PC-3 (cell line): ENCODE measurements at regions of chr1 and their contacts with region 1.

Region 1: DNA sequence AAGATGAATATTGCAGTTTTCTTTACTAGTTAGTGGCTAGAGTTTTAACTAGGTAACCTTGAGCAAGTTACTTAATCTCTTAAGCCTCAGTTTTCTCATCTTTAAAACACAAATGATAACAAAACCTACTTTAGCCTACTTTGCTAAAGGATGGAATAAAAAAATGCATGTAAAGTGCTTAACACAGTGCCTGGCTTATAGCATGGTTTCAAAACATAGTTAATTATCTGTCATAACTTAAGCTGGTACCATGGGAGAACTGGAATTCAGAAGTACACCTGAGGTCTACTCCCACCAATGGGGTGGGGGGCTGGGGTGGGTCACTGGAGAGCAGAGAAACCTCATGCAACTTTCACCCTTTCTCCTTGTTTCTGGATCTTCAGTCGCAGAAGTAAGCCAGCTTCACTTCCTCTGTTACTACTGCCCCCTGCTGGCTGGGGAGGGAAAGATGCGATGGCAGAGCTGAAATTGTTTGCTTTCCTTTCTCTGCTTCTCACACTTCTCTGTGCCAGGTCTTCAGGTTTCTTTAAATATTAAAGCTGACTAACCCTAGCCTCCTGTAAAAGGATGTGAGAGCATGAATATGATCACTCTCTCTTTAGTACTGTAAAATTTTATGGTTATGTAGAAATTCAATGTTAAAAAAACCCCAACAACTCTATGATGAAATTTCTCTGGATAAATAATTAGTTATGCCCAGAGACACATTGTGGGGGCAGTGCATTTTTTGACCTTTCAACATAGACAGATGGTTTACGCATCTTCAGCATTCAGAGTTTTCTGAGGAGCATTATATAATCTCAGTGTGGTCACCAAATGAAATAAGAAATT is 324.2 kb downstream of the HLX start:
- DNase-seq: peak; percentile 94
- ATAC-seq: peak; percentile 95
- H3K4me3 ChIP-seq: no peak overlapping the region
- H3K27ac ChIP-seq: peak overlapping the region; percentile 8; the same call in 1 of the 2 replicates
- H3K4me1 ChIP-seq: peaks cover 17% of the 10 kb centered on the region
- H3K27me3 ChIP-seq: no peaks in the 10 kb centered on the region
- CTCF ChIP-seq: peak; percentile 87

Region 2: DNA sequence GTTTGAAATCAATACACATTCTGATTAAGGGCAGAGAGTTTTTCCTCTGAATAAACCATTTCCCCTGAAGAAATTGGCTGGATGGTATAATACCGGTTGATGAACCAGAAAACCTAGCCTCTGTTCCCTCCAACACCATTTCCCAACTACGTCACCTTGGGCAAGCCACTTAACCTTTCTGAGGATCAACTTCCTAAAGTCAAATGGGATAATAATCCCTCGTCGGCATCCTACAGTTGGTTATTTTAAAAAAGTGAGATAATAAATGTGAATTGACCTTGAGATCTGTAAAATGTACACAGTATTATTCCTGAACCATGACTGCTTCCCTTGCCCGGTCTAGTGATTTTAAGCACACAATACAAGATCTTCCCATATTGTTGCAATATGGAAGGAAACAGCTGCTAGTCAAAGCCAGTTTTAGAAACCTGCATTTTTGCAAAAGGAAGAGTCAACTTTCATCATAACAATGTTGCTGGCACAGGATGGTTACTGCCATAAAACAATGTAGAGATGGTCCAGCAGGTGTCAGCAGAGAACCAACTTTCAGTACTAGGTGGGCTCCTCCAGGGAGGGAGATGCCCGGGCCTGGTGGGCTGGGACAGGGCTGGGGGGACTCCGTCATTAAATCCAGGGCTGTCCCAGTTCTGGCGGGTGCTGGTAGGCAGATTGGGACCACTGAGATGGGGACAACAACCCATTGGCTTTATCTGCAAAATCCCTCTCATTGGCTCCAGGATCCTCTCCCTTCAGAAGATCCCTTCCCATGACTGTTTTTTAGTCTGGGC is 329.4 kb before region 1 on chr1:
- CTCF ChIA-PET with region 1: interaction called, 5 read pairs
- POLR2A ChIA-PET with region 1: no interaction called
- intact Hi-C with region 1: loop called (anchors 1 kb)
- DNase-seq: peak; percentile 72
- ATAC-seq: peak; percentile 40
- H3K4me3 ChIP-seq: no peak overlapping the region
- H3K27ac ChIP-seq: no peak overlapping the region
- H3K4me1 ChIP-seq: peaks cover 8% of the 10 kb centered on the region; the same call in 1 of the 2 replicates
- H3K27me3 ChIP-seq: no peaks in the 10 kb centered on the region
- CTCF ChIP-seq: peak; percentile 97

Region 3: DNA sequence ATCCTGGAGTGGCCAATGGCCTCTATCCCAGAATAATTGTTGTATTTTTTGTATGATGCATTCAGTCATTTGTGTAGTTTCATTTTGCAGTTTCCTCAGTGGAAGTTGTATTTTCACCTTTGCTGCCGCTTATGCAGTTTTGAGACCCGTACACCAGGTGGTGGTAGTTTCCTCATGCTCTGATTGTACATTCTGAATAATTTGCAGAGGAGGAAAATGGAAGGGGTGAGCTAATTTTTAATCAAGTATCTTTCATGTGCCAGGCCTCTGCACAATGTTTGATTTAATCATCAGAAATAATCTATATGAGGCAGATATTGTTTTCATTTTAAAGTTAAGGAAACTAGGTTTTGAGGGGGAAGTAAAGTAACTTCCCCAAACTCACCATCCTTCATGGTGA is 294.7 kb before region 1 on chr1:
- CTCF ChIA-PET with region 1: interaction called, 3 read pairs
- POLR2A ChIA-PET with region 1: no interaction called
- intact Hi-C with region 1: loop called (anchors 1 kb)
- DNase-seq: peak; percentile 62
- ATAC-seq: no peak
- H3K4me3 ChIP-seq: no peak overlapping the region
- H3K27ac ChIP-seq: no peak overlapping the region
- H3K4me1 ChIP-seq: peaks cover 24% of the 10 kb centered on the region
- H3K27me3 ChIP-seq: no peaks in the 10 kb centered on the region
- CTCF ChIP-seq: peak; percentile 89

Region 4: DNA sequence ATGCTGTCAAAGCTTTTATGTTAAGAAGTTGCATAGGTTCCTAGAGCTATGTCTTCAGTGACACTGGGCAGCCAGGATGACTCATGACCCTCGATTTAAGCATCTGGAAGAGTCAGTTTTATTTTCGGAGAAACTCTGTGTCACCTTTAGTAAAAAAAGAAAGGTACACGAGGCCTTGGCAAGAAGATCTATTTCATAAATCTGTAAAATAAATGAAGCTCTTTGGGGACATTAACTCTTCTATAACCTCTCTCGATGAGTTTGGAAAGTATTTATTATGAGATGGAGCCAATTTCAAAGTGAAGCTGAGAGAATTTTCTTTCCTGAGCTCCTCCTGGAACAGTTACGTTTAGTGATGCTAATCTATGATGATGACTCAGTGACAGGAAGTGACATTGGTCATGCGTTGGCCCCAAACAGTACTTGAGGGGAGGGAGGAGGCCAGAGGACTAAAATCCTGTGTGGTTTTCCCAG is 167.7 kb before region 1 on chr1:
- CTCF ChIA-PET with region 1: interaction called, 5 read pairs
- POLR2A ChIA-PET with region 1: no interaction called
- intact Hi-C with region 1: loop called (anchors 5 kb)
- DNase-seq: peak; percentile 92
- ATAC-seq: peak; percentile 46
- H3K4me3 ChIP-seq: peak overlapping the region; percentile 59
- H3K27ac ChIP-seq: peak overlapping the region; percentile 90
- H3K4me1 ChIP-seq: peaks cover 50% of the 10 kb centered on the region
- H3K27me3 ChIP-seq: no peaks in the 10 kb centered on the region
- CTCF ChIP-seq: no peak

Region 5: GRCh38 chr1:221100611-221101010 is 102.8 kb before region 1 on chr1:
- CTCF ChIA-PET with region 1: no interaction called
- POLR2A ChIA-PET with region 1: no interaction called
- intact Hi-C with region 1: loop called (anchors 5 kb)
- DNase-seq: peak; percentile 89
- ATAC-seq: peak; percentile 62
- H3K4me3 ChIP-seq: no peak overlapping the region
- H3K27ac ChIP-seq: peak overlapping the region; percentile 62
- H3K4me1 ChIP-seq: peaks cover 58% of the 10 kb centered on the region
- H3K27me3 ChIP-seq: no peaks in the 10 kb centered on the region
- CTCF ChIP-seq: no peak

Region 6: GRCh38 chr1:221272940-221273339 is 69.5 kb after region 1 on chr1:
- CTCF ChIA-PET with region 1: interaction called, 4 read pairs
- POLR2A ChIA-PET with region 1: no interaction called
- intact Hi-C with region 1: loop called (anchors 1 kb)
- DNase-seq: peak; percentile 68
- ATAC-seq: peak; percentile 88
- H3K4me3 ChIP-seq: no peak overlapping the region
- H3K27ac ChIP-seq: no peak overlapping the region
- H3K4me1 ChIP-seq: no peaks in the 10 kb centered on the region
- H3K27me3 ChIP-seq: no peaks in the 10 kb centered on the region
- CTCF ChIP-seq: peak; percentile 81

Region 7: DNA sequence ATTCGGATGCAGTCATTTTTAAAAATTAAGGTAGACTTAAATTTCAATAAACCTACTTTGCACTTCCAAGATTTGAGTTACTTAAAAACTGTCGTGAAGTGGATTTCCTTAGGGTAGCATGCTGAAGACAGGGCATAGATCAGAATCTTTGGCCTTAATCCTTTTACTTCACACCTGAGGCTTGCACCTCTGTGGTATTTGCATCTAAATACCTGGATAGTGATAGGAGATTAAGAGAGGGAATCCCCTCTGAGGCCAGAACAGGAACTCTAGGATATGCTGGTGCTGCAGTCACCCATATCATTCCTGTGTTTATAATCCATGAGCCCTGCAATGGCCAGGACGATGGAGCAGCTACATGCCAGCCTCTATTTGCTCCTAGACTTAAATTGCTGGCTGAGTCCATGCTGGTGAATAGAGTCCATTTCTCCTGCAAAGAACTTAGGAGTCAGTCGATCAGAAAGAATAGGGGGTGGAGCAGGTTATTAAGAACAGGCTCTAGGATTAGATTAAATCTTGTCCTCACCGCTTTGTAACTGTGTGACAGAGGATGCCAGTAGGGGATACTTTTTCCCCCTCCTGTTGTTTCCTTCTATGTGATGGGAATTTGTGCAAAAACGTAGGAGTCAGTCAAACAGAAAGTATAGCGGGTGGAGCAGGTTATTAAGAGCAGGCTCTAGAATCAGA is 204.8 kb after region 1 on chr1:
- CTCF ChIA-PET with region 1: no interaction called
- POLR2A ChIA-PET with region 1: no interaction called
- intact Hi-C with region 1: no loop called
- DNase-seq: no peak
- ATAC-seq: no peak
- H3K4me3 ChIP-seq: no peak overlapping the region
- H3K27ac ChIP-seq: no peak overlapping the region
- H3K4me1 ChIP-seq: no peaks in the 10 kb centered on the region
- H3K27me3 ChIP-seq: no peaks in the 10 kb centered on the region
- CTCF ChIP-seq: no peak